ENCODE measurements at regions of chr1 and their contacts with region 1.

Region 1: GRCh38 chr1:93352376-93352775 is 6.7 kb downstream of the DR1 start:
- DNase-seq: no peak
- ATAC-seq: no peak
- H3K4me3 Mint-ChIP-seq: no peak overlapping the region
- H3K27ac Mint-ChIP-seq: no peak overlapping the region
- H3K4me1 Mint-ChIP-seq: peaks cover 51% of the 10 kb centered on the region
- H3K27me3 Mint-ChIP-seq: no peaks in the 10 kb centered on the region
- CTCF ChIP-seq: no peak

Region 2: DNA sequence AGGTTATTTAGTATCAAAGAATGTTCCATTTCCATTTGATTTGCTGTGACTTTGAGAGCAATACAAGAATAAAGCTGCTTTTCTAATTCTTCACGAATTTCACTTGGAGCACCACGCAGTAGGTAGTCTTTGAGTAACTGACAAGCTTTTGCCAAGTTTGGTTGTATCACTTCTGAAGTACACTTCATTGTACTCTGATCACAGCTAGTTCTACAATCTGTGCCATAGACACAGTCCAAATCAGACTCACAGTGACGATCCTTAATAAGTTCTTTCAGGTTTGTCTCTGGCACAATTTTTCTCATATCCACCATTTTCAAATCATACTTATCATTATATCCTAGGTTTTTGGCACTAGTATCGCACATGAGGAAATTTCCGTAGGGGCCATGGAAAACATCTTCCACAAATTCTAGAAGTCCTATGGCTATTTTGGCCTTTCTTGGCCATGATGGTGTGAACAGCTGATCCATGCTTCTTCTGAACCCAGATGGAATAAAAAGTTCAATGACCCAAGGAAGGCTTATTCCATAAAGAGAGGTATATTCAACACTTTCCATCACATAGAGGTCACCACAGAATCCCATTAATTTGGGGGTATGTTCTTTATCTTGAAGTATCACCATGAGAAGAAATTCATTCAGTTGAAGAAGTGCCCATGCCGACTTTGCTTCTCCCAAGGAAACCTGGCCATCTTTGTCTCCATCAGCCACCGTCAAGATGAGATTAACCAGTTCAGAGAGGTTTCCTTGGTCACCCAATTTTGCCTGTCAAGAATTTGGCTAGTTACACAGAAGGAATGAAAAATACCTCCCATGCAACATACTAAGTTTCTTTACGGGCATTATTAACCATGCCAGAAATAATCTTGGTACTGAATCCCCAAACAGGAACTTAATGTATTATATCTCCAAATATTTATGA is 508.7 kb before region 1 on chr1:
- CTCF ChIA-PET with region 1: no interaction called
- POLR2A ChIA-PET with region 1: no interaction called
- intact Hi-C with region 1: no loop called
- DNase-seq: no peak
- ATAC-seq: no peak
- H3K4me3 Mint-ChIP-seq: no peak overlapping the region
- H3K27ac Mint-ChIP-seq: no peak overlapping the region
- H3K4me1 Mint-ChIP-seq: peaks cover 10% of the 10 kb centered on the region
- H3K27me3 Mint-ChIP-seq: no peaks in the 10 kb centered on the region
- CTCF ChIP-seq: no peak

Region 3: GRCh38 chr1:93369734-93370133 is 17.4 kb after region 1 on chr1:
- CTCF ChIA-PET with region 1: no interaction called
- POLR2A ChIA-PET with region 1: interaction called, 6 read pairs
- intact Hi-C with region 1: loop called (anchors 2 kb)
- DNase-seq: no peak
- ATAC-seq: no peak
- H3K4me3 Mint-ChIP-seq: no peak overlapping the region
- H3K27ac Mint-ChIP-seq: no peak overlapping the region
- H3K4me1 Mint-ChIP-seq: no peaks in the 10 kb centered on the region
- H3K27me3 Mint-ChIP-seq: no peaks in the 10 kb centered on the region
- CTCF ChIP-seq: no peak

Region 4: DNA sequence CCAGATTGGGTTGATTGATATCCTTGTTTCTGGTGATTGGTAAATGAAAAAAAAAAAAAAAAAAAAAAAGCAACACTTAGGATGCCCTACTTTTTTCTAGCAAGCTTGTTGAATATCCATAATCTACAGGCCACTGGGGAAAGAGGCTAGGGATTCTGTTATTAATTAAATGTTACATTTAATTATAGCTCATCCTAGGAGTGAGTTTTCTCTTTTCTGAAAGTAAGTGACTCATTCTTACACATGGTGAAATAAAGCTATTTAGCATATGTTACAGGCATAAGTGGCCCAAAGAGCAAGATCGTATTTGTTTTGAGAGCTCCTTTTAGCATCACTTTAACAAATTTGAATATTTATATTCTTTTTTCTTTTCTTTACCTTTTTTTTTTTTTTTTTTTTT is 190.0 kb after region 1 on chr1:
- CTCF ChIA-PET with region 1: no interaction called
- POLR2A ChIA-PET with region 1: interaction called, 12 read pairs
- intact Hi-C with region 1: no loop called
- DNase-seq: no peak
- ATAC-seq: no peak
- H3K4me3 Mint-ChIP-seq: no peak overlapping the region
- H3K27ac Mint-ChIP-seq: no peak overlapping the region
- H3K4me1 Mint-ChIP-seq: no peaks in the 10 kb centered on the region
- H3K27me3 Mint-ChIP-seq: no peaks in the 10 kb centered on the region
- CTCF ChIP-seq: no peak

Measured in activated B cell treated with CpG ODN at 0.5 μM for 24 hours (primary cell).